Endothelial cell of umbilical vein (primary cell): ENCODE measurements at regions of chr1 and their contacts with region 1.

Region 1: DNA sequence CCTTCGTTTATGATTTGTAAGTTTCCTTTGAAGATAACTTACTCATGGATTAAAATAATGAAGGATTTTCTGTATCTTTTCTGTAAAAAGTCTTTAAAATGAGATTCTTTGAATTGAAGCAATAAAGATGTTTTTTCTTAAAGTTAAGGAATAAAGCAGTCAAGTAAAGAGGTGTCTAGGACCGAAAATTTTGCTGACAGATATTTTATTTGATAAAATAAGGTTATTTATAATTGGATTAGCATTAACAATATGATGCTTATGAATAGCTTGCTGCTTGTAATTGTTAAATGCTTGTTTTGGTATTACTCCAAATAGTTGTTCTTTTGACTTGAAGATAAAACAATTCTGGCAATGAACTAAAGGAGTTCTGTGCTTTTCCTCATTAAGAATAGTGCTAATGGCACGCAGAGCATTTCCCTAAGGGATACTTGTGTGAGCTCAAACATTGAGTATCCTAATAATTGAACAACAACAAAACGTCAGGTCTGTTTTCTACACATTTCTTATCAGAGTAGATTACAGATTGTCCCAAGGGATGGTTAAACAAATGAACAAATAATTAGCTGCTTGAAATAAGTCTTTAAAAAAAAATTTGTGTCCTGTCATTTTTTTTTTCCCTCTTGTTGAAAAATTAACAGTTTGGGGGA is 16.6 kb downstream of the TSNAX start:
- DNase-seq: peak; percentile 87
- H3K4me3 ChIP-seq: no peak overlapping the region
- H3K27ac ChIP-seq: peak overlapping the region; percentile 13
- H3K4me1 ChIP-seq: peaks cover 25% of the 10 kb centered on the region
- H3K27me3 ChIP-seq: no peaks in the 10 kb centered on the region
- CTCF ChIP-seq: no peak
- POLR2A ChIP-seq: no peak

Region 2: DNA sequence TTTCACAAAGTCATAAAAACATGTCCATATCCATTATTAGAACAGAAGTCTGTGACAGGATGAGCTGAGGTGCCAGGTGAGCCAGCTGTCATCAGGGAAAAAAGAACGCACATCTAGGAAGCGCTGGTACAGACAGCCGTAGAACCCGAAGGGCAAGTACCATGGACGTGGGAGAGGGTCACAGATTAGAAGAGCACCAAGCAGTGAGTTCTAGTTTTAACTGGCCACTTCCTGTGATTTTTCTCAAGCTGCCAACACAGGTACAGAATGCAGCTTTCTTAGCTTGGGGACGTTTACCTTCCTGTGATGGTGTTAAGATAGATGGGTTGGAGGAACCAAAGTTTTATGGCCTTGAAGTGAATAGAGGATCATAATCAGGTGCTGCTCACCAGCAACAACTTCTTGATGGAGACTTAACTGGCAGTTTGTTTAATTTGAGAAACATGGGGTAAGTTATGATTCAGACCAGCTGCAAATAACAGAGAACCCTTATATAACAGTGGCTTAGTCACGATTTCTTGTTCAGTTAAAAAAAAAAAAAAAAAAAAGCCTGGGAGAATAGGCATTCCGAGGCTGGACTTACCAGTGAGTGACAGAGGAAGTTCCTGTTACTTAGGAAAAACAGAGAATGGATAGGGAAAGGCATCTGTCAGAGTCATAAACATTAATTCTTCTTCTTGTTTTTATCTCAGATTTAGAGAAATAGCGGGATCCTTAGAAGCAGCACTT is 862.0 kb before region 1 on chr1:
- CTCF ChIA-PET with region 1: no interaction called
- POLR2A ChIA-PET with region 1: no interaction called
- dilution Hi-C with region 1: no loop called
- intact Hi-C with region 1: no loop called
- DNase-seq: no peak
- H3K4me3 ChIP-seq: no peak overlapping the region
- H3K27ac ChIP-seq: no peak overlapping the region
- H3K4me1 ChIP-seq: peaks cover 4% of the 10 kb centered on the region
- H3K27me3 ChIP-seq: no peaks in the 10 kb centered on the region
- CTCF ChIP-seq: no peak
- POLR2A ChIP-seq: no peak

Region 3: DNA sequence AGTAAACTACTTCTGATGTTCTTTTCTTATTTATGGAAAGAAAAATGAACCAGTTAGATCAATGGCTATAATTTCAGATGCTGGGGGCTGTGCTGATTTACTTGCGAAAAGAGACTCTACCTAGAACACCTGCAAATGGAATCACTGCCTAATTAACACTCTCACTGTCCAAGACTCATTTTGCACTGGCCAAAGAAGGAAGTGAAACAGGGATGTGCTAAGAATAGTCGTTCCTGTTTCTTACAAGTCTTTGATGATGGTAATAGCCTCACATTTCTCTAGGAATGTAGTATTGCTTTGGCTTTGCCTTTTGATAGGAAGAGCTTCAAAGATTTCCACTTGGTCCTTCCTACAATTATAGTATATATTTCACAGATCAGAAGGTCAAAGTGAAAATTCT is 29.3 kb before region 1 on chr1:
- CTCF ChIA-PET with region 1: no interaction called
- POLR2A ChIA-PET with region 1: no interaction called
- dilution Hi-C with region 1: no loop called
- intact Hi-C with region 1: no loop called
- DNase-seq: no peak
- H3K4me3 ChIP-seq: no peak overlapping the region
- H3K27ac ChIP-seq: no peak overlapping the region
- H3K4me1 ChIP-seq: no peaks in the 10 kb centered on the region
- H3K27me3 ChIP-seq: no peaks in the 10 kb centered on the region
- CTCF ChIP-seq: no peak
- POLR2A ChIP-seq: no peak

Region 4: GRCh38 chr1:231557898-231558707 is 13.0 kb after region 1 on chr1:
- CTCF ChIA-PET with region 1: interaction called, 7 read pairs
- POLR2A ChIA-PET with region 1: no interaction called
- dilution Hi-C with region 1: no loop called
- intact Hi-C with region 1: loop called (anchors 2 kb)
- DNase-seq: peak; percentile 26
- H3K4me3 ChIP-seq: no peak overlapping the region
- H3K27ac ChIP-seq: no peak overlapping the region
- H3K4me1 ChIP-seq: peaks cover 4% of the 10 kb centered on the region
- H3K27me3 ChIP-seq: no peaks in the 10 kb centered on the region
- CTCF ChIP-seq: no peak
- POLR2A ChIP-seq: no peak

Region 5: GRCh38 chr1:231571904-231572303 is 26.8 kb after region 1 on chr1:
- CTCF ChIA-PET with region 1: interaction called, 5 read pairs
- POLR2A ChIA-PET with region 1: no interaction called
- dilution Hi-C with region 1: no loop called
- intact Hi-C with region 1: loop called (anchors 1 kb)
- DNase-seq: peak; percentile 94
- H3K4me3 ChIP-seq: peak overlapping the region in 1 of 3 experiments; percentile 1
- H3K27ac ChIP-seq: peak overlapping the region; percentile 22
- H3K4me1 ChIP-seq: peaks cover 12% of the 10 kb centered on the region
- H3K27me3 ChIP-seq: no peaks in the 10 kb centered on the region
- CTCF ChIP-seq: no peak
- POLR2A ChIP-seq: no peak